PC-9 (cell line): ENCODE measurements at regions of chr11 and their contacts with region 1.

Region 1: DNA sequence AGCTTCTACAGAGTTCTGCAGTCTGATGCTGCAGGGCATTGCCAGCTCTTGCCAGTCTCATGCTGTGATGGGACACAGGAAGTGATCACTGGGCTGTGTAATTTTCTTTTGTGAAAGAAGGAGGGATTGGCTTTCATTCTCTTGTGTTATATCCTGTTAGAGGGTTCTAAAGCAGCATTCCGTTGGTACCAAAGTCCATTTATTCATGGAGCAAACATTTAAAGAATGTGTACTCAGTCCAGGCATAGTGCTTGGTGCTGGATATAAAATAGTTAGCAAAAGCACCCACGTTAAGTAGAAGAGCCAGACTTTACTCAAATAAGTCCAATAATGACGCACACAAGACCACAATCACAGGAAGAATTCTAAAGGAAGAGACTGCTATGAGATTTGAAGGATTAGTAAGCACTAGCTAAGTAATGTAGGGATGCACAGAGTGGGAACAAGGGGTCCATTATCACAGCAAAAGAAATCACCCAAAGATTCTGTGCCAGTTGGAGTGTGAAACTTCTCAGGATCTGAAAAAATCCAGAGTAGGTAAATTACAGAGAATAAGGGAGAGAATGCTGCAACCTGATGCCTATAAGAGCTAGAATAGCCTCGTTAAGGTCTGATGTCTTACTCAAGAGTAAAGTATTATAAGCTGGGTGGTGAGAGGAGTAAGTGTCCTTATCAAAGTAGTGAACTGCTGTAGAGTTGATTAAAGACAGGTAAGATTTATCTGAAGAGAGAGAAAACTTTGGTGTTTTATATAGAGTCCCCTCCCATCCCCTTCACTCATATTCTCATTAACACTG is 728.3 kb downstream of the METTL15 start:
- DNase-seq: peak; percentile 35 to 61
- H3K4me3 ChIP-seq: no peak overlapping the region
- H3K27ac ChIP-seq: peak overlapping the region; percentile 43; the same call in 1 of the 2 replicates
- H3K4me1 ChIP-seq: 0 out of 2 replicates have a peak, but pooled peaks cover 10% of the 10 kb centered on the region
- H3K27me3 ChIP-seq: no peaks in the 10 kb centered on the region
- CTCF ChIP-seq: no peak

Region 2: GRCh38 chr11:28343276-28344233 is 492.9 kb before region 1 on chr11:
- CTCF ChIA-PET with region 1: no interaction called
- POLR2A ChIA-PET with region 1: no interaction called
- intact Hi-C with region 1: loop called (anchors 10 kb)
- DNase-seq: peak; percentile 38 to 61
- H3K4me3 ChIP-seq: no peak overlapping the region
- H3K27ac ChIP-seq: peak overlapping the region; percentile 81
- H3K4me1 ChIP-seq: peaks cover 37% of the 10 kb centered on the region
- H3K27me3 ChIP-seq: no peaks in the 10 kb centered on the region
- CTCF ChIP-seq: no peak

Region 3: GRCh38 chr11:28674433-28675103 is 161.9 kb before region 1 on chr11:
- CTCF ChIA-PET with region 1: no interaction called
- POLR2A ChIA-PET with region 1: no interaction called
- intact Hi-C with region 1: no loop called
- DNase-seq: peak in 1 of 2 experiments; percentile 22
- H3K4me3 ChIP-seq: no peak overlapping the region
- H3K27ac ChIP-seq: no peak overlapping the region
- H3K4me1 ChIP-seq: no peaks in the 10 kb centered on the region
- H3K27me3 ChIP-seq: no peaks in the 10 kb centered on the region
- CTCF ChIP-seq: peak; percentile 30; the same call in 1 of the 2 replicates

Region 4: GRCh38 chr11:28799316-28799715 is 37.2 kb before region 1 on chr11:
- CTCF ChIA-PET with region 1: no interaction called
- POLR2A ChIA-PET with region 1: no interaction called
- intact Hi-C with region 1: no loop called
- DNase-seq: no peak
- H3K4me3 ChIP-seq: no peak overlapping the region
- H3K27ac ChIP-seq: no peak overlapping the region
- H3K4me1 ChIP-seq: no peaks in the 10 kb centered on the region
- H3K27me3 ChIP-seq: no peaks in the 10 kb centered on the region
- CTCF ChIP-seq: no peak

Region 5: DNA sequence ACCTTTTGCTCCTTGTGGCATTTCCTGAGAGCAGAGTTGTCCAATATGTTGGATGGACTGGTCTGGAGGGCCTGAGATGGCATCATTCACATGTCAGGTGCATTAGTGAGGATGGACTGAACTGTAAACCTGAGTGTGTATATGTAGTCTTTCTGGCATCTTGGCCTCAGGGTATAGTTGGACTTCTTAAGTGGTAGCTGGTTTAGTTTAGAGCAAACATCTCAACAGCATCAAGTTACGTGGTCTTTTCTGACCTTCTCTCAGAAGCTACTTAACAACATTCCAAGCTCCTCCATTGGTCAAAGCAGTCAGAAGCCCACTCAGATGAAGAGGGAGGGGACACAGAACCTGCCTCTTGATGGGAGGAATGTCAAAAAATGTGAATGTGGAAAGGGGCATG is 101.6 kb after region 1 on chr11:
- CTCF ChIA-PET with region 1: no interaction called
- POLR2A ChIA-PET with region 1: no interaction called
- intact Hi-C with region 1: loop called (anchors 2 kb)
- DNase-seq: peak; percentile 35 to 46
- H3K4me3 ChIP-seq: no peak overlapping the region
- H3K27ac ChIP-seq: no peak overlapping the region
- H3K4me1 ChIP-seq: peaks cover 6% of the 10 kb centered on the region
- H3K27me3 ChIP-seq: no peaks in the 10 kb centered on the region
- CTCF ChIP-seq: no peak

Region 6: DNA sequence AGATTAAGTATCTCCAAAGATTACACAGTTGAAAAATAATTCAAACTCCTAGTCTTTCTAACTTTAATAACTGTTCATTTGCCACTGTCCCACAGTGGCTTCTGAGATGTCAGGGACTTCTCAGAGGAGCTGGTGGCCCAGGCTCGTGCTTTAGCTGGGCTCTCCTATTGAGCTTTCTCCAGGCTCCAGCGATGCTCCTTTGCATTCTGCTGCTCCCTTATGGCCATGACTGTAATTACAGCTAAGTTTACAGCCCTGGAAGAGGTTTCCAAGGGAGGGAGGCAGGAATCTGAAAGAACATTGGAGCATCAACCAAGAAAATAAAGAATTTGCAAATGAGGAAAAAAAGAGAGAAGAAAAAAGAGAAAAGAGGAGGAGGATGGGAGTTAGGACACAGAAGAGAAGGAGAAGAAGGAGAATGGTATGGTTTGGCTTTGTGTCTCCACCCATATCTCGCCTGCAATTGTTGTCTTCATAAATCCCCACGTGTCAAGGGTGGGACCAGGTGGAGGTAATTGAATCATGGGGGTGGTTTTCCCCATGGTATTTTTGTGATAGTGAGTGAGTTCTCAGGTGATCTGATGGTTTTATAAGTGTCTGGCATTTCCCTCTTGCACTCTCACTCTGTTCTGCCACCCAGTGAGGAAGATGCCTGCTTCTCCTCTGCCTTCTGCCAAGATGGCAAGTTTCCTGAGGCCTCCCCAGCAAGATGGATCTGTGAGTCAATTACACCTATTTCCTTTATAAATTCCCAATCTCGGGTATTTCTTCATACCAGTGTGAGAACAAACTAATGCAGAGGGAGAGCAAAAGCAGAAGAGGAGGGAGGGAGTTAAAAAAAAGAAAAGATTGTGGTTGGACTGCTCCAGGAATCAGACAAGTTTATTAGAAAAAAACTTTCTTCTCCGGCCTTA is 323.3 kb after region 1 on chr11:
- CTCF ChIA-PET with region 1: no interaction called
- POLR2A ChIA-PET with region 1: no interaction called
- intact Hi-C with region 1: loop called (anchors 10 kb)
- DNase-seq: peak in 1 of 2 experiments; percentile 48
- H3K4me3 ChIP-seq: no peak overlapping the region
- H3K27ac ChIP-seq: no peak overlapping the region
- H3K4me1 ChIP-seq: no peaks in the 10 kb centered on the region
- H3K27me3 ChIP-seq: no peaks in the 10 kb centered on the region
- CTCF ChIP-seq: peak; percentile 79